GM12878 (cell line): ENCODE measurements at regions of chr14 and their contacts with region 1.

Region 1: GRCh38 chr14:34098045-34098984 is 147.4 kb upstream of the EGLN3 start:
- DNase-seq: peak; percentile 36
- ATAC-seq: peak; percentile 59
- H3K4me3 ChIP-seq: no peak overlapping the region
- H3K27ac ChIP-seq: no peak overlapping the region
- H3K4me1 ChIP-seq: no peaks in the 10 kb centered on the region
- H3K27me3 ChIP-seq: no peaks in the 10 kb centered on the region
- CTCF ChIP-seq: peak; percentile 57 to 74 (median 63); a peak in 5 of 6 replicates
- EP300 ChIP-seq: no peak
- POLR2A ChIP-seq: no peak
- RAD21 ChIP-seq: peak; percentile 92

Region 2: DNA sequence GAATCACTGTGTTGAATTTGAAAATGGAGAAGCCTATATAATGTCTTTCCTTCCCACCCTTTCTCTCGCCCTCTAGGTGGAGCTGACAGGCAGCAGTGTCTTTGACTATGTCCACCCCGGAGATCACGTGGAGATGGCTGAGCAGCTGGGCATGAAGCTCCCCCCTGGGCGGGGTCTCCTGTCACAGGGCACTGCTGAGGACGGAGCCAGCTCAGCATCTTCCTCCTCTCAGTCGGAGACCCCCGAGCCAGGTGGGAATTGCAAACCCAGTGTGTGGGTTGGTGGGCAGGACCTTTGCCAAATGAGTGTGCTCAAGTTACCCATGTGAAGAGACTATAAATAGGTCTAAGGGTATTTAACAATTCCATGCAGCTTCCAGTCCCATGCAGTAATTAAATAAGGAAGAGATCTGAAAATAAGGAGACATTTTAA is 422.2 kb before region 1 on chr14:
- CTCF ChIA-PET with region 1: interaction called, 6 read pairs
- POLR2A ChIA-PET with region 1: no interaction called
- RAD21 ChIA-PET with region 1: interaction called, 18 read pairs
- SMC1A ChIA-PET with region 1: interaction called, 17 read pairs
- in situ Hi-C with region 1: no loop called
- intact Hi-C with region 1: no loop called
- DNase-seq: no peak
- ATAC-seq: peak; percentile 94
- H3K4me3 ChIP-seq: no peak overlapping the region
- H3K27ac ChIP-seq: no peak overlapping the region
- H3K4me1 ChIP-seq: no peaks in the 10 kb centered on the region
- H3K27me3 ChIP-seq: no peaks in the 10 kb centered on the region
- CTCF ChIP-seq: peak; percentile 14 to 51 (median 31); a peak in 4 of 6 replicates
- EP300 ChIP-seq: no peak
- POLR2A ChIP-seq: no peak
- RAD21 ChIP-seq: 0 out of 2 replicates have a peak, but pooled peaks have one; percentile 15

Region 3: GRCh38 chr14:33908540-33909223 is 189.6 kb before region 1 on chr14:
- CTCF ChIA-PET with region 1: interaction called, 7 read pairs
- POLR2A ChIA-PET with region 1: no interaction called
- RAD21 ChIA-PET with region 1: interaction called, 8 read pairs
- SMC1A ChIA-PET with region 1: interaction called, 22 read pairs
- in situ Hi-C with region 1: no loop called
- intact Hi-C with region 1: no loop called
- DNase-seq: no peak
- ATAC-seq: no peak
- H3K4me3 ChIP-seq: no peak overlapping the region
- H3K27ac ChIP-seq: no peak overlapping the region
- H3K4me1 ChIP-seq: no peaks in the 10 kb centered on the region
- H3K27me3 ChIP-seq: no peaks in the 10 kb centered on the region
- CTCF ChIP-seq: no peak
- EP300 ChIP-seq: no peak
- POLR2A ChIP-seq: no peak
- RAD21 ChIP-seq: no peak

Region 4: GRCh38 chr14:33964599-33965317 is 133.6 kb before region 1 on chr14:
- CTCF ChIA-PET with region 1: interaction called, 23 read pairs
- POLR2A ChIA-PET with region 1: interaction called, 4 read pairs
- RAD21 ChIA-PET with region 1: interaction called, 19 read pairs
- SMC1A ChIA-PET with region 1: interaction called, 31 read pairs
- in situ Hi-C with region 1: no loop called
- intact Hi-C with region 1: no loop called
- DNase-seq: no peak
- ATAC-seq: peak; percentile 30; the same call in 2 of the 3 replicates
- H3K4me3 ChIP-seq: no peak overlapping the region
- H3K27ac ChIP-seq: no peak overlapping the region
- H3K4me1 ChIP-seq: no peaks in the 10 kb centered on the region
- H3K27me3 ChIP-seq: no peaks in the 10 kb centered on the region
- CTCF ChIP-seq: no peak; a peak in 1 of 6 replicates
- EP300 ChIP-seq: no peak
- POLR2A ChIP-seq: no peak
- RAD21 ChIP-seq: no peak

Region 5: DNA sequence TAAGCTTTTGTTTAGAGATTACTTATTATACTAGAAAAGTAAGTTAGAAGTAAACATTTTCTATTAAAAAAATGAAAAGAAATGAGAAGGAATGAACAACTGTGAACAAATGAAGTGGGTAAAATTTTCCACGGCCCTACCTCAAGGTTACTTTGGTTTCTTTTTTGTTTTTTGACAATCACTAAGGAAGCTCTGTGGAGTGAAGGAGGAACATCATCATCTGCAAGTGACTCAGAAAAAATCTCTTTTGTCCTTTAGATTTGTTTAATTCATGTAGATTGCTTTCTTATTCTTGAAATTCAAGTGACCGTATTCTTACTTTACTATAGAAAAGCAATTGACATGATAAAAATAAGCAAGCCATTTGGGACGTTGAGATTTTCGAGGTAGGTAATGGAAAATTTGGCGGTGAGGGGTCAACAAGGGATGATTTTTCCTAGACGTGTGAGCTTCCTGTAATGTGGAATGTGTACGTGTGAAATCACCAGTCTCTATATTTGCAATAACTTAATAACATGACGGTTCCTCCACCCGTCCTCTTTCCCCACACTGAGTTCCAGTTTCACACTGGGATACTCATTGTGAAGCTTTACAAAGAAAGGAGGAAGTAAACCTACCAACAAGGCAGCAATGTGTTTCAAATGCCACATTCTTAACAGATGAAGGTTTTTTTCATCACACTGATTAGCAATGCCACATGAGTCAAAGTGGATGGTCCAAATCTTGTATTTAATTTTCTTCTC is 85.2 kb before region 1 on chr14:
- CTCF ChIA-PET with region 1: interaction called, 30 read pairs
- POLR2A ChIA-PET with region 1: no interaction called
- RAD21 ChIA-PET with region 1: interaction called, 41 read pairs
- SMC1A ChIA-PET with region 1: interaction called, 90 read pairs
- in situ Hi-C with region 1: no loop called
- intact Hi-C with region 1: no loop called
- DNase-seq: peak; percentile 76
- ATAC-seq: peak; percentile 86
- H3K4me3 ChIP-seq: peak overlapping the region; percentile 41; the same call in 1 of the 2 replicates
- H3K27ac ChIP-seq: peak overlapping the region; percentile 70
- H3K4me1 ChIP-seq: peaks cover 18% of the 10 kb centered on the region
- H3K27me3 ChIP-seq: no peaks in the 10 kb centered on the region
- CTCF ChIP-seq: no peak
- EP300 ChIP-seq: no peak
- POLR2A ChIP-seq: no peak
- RAD21 ChIP-seq: no peak

Region 6: GRCh38 chr14:34059855-34060638 is 38.3 kb before region 1 on chr14:
- CTCF ChIA-PET with region 1: interaction called, 25 read pairs
- POLR2A ChIA-PET with region 1: interaction called, 7 read pairs
- RAD21 ChIA-PET with region 1: interaction called, 51 read pairs
- SMC1A ChIA-PET with region 1: interaction called, 79 read pairs
- in situ Hi-C with region 1: no loop called
- intact Hi-C with region 1: no loop called
- DNase-seq: no peak
- ATAC-seq: peak; percentile 91
- H3K4me3 ChIP-seq: peak overlapping the region; percentile 57; the same call in 1 of the 2 replicates
- H3K27ac ChIP-seq: peak overlapping the region; percentile 52; the same call in 1 of the 2 replicates
- H3K4me1 ChIP-seq: peaks cover 20% of the 10 kb centered on the region
- H3K27me3 ChIP-seq: no peaks in the 10 kb centered on the region
- CTCF ChIP-seq: peak in 2 of 3 experiments; percentile 25 to 39; a peak in 3 of 6 replicates
- EP300 ChIP-seq: 0 out of 4 replicates have a peak, but pooled peaks of 1 of the 2 experiments have one; percentile 42
- POLR2A ChIP-seq: peak; percentile 83
- RAD21 ChIP-seq: 0 out of 2 replicates have a peak, but pooled peaks have one; percentile 6

Region 7: DNA sequence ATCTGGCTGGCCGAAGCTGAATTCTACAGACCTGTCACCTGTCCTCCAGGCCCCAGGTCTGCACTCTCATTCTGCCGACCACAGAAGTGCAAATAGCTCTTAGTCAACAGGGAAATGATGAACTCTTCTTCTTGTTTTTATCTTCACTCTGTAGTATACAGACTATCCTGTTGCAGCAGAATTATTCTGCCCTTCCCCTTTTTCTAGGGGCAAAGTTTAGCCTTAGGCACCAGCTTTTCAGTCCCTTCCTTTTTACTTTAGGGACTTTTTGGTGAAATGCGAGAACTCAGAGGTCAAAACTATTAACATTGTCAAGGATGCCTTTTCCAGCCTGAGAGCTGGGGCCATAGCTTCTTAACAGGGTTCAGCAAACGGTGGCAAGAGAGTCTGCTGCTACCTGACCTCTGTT is 82.1 kb after region 1 on chr14:
- CTCF ChIA-PET with region 1: interaction called, 7 read pairs
- POLR2A ChIA-PET with region 1: no interaction called
- RAD21 ChIA-PET with region 1: interaction called, 14 read pairs
- SMC1A ChIA-PET with region 1: interaction called, 10 read pairs
- in situ Hi-C with region 1: no loop called
- intact Hi-C with region 1: no loop called
- DNase-seq: no peak
- ATAC-seq: peak; percentile 70
- H3K4me3 ChIP-seq: no peak overlapping the region
- H3K27ac ChIP-seq: no peak overlapping the region
- H3K4me1 ChIP-seq: peaks cover 11% of the 10 kb centered on the region
- H3K27me3 ChIP-seq: no peaks in the 10 kb centered on the region
- CTCF ChIP-seq: no peak
- EP300 ChIP-seq: no peak; a peak in 1 of 4 replicates
- POLR2A ChIP-seq: no peak
- RAD21 ChIP-seq: no peak

Region 8: DNA sequence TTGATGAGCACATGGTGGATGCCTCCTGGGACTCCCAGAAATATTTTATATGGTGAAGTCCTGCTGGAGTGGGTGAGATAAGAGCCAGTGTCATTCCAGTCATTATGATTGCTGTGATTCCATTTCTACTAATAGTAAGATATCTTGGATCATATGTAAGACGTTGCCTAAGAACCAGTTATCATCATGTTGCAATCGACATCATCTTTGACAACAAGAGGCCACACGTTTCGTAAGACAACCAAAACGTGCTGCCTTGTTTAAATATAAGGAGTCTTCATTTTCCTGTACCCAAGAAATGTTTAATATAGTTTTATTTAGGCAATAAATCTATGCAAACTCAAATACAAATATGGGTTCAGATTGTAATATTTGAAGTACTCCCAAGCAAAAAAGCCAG is 305.3 kb after region 1 on chr14:
- CTCF ChIA-PET with region 1: no interaction called
- POLR2A ChIA-PET with region 1: no interaction called
- RAD21 ChIA-PET with region 1: no interaction called
- SMC1A ChIA-PET with region 1: no interaction called
- in situ Hi-C with region 1: no loop called
- intact Hi-C with region 1: no loop called
- DNase-seq: no peak
- ATAC-seq: no peak
- H3K4me3 ChIP-seq: no peak overlapping the region
- H3K27ac ChIP-seq: no peak overlapping the region
- H3K4me1 ChIP-seq: no peaks in the 10 kb centered on the region
- H3K27me3 ChIP-seq: no peaks in the 10 kb centered on the region
- CTCF ChIP-seq: no peak
- EP300 ChIP-seq: no peak
- POLR2A ChIP-seq: no peak
- RAD21 ChIP-seq: no peak

Region 9: DNA sequence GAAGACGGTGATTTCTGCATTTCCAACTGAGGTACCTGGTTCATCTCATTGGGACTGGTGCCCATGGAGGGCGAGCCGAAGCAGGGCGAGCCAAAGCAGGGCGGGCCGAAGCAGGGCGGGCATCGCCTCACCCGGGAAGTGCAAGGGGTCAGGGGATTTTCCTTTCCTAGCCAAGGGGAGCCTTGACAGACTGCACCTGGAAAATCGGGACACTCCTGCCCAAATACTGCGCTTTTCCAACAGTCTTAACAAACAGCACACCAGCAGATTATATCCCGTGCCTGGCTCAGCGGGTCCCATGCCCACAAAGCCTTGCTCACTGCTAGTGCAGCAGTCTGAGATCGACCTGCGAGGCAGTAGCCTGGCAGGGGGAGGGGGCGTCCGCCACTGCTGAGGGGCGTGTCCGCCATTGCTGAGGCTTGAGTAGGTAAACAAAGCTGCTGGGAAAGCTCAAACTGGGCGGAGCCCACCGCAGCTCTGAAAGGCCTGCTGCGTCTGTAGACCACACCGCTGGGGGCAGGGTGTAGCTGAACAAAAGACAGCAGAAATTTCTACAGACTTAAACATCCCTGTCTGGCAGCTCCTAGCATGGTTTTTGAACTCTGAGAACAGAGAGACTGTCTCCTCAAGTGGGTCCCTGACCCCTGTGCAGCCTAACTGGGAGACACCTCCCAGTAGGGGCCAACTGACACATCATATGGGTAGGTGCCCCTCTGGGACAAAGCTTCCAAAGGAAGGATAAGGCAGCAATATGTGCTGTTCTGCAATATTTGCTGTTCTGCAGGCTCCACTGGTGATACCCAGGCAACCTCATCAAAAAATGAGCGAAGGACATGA is 699.6 kb after region 1 on chr14:
- CTCF ChIA-PET with region 1: no interaction called
- POLR2A ChIA-PET with region 1: no interaction called
- RAD21 ChIA-PET with region 1: no interaction called
- SMC1A ChIA-PET with region 1: no interaction called
- in situ Hi-C with region 1: no loop called
- intact Hi-C with region 1: no loop called
- DNase-seq: no peak
- ATAC-seq: no peak
- H3K4me3 ChIP-seq: no peak overlapping the region
- H3K27ac ChIP-seq: no peak overlapping the region
- H3K4me1 ChIP-seq: no peaks in the 10 kb centered on the region
- H3K27me3 ChIP-seq: no peaks in the 10 kb centered on the region
- CTCF ChIP-seq: no peak
- EP300 ChIP-seq: no peak
- POLR2A ChIP-seq: no peak
- RAD21 ChIP-seq: no peak